ENCODE measurements at regions of chr1 and their contacts with region 1.

Region 1: DNA sequence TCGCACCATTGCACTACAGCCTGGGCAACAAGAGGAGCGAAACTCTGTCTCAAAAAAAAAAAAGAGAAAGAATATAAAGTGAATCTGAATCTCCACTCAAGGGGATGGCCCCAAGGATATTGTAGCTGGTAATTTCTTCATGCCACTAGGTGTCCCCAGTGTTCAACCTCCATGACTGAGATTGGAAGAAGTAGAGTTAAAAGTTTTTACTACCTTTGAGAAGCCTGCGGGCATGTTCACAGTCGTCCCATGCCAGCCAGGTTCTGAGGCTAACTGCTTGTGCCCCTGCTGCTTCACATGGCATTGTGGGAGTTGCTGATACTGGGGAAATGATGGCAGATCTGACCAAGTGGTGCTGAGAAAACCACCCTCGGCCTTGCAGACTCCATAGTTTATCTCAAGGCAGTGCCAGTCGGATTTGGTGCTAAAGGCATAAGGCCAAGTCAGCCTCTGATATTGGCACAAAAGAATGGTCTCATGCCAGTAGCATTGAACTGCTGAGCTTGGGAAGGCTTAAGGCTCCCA is 10.8 kb upstream of the SHISA4 start:
- DNase-seq: peak; percentile 85
- H3K4me3 Mint-ChIP-seq: no peak overlapping the region
- H3K27ac Mint-ChIP-seq: no peak overlapping the region
- H3K4me1 Mint-ChIP-seq: peaks cover 21% of the 10 kb centered on the region
- H3K27me3 Mint-ChIP-seq: no peaks in the 10 kb centered on the region
- CTCF ChIP-seq: peak; percentile 93

Region 2: GRCh38 chr1:201530741-201531531 is 347.0 kb before region 1 on chr1:
- CTCF ChIA-PET with region 1: interaction called, 15 read pairs
- POLR2A ChIA-PET with region 1: interaction called, 4 read pairs
- intact Hi-C with region 1: loop called (anchors 1 kb)
- DNase-seq: peak; percentile 91
- H3K4me3 Mint-ChIP-seq: no peak overlapping the region
- H3K27ac Mint-ChIP-seq: peak overlapping the region; percentile 46
- H3K4me1 Mint-ChIP-seq: peaks cover 9% of the 10 kb centered on the region
- H3K27me3 Mint-ChIP-seq: no peaks in the 10 kb centered on the region
- CTCF ChIP-seq: peak; percentile 99

Region 3: DNA sequence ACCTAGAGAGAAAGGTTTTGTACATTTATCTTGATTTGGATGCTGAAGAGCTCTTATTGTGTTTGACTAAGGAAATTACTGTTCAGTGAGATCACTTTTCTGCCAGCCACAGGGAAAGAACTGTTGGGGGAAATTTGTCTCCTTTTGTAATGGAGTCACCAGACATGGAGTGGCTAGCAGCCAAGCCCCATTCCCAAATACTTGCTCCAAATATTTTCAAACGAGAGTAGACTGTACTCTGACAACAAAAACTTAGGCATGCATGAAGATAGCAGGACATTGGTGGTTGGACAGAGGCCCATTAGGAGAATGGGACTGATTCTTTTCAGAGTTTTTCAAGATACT is 27.9 kb before region 1 on chr1:
- CTCF ChIA-PET with region 1: interaction called, 18 read pairs
- POLR2A ChIA-PET with region 1: interaction called, 8 read pairs
- intact Hi-C with region 1: no loop called
- DNase-seq: peak; percentile 51
- H3K4me3 Mint-ChIP-seq: no peak overlapping the region
- H3K27ac Mint-ChIP-seq: peak overlapping the region; percentile 58
- H3K4me1 Mint-ChIP-seq: peaks cover 41% of the 10 kb centered on the region
- H3K27me3 Mint-ChIP-seq: no peaks in the 10 kb centered on the region
- CTCF ChIP-seq: no peak

Region 4: GRCh38 chr1:201916649-201917249 is 38.8 kb after region 1 on chr1:
- CTCF ChIA-PET with region 1: interaction called, 5 read pairs
- POLR2A ChIA-PET with region 1: interaction called, 15 read pairs
- intact Hi-C with region 1: no loop called
- DNase-seq: peak; percentile 100
- H3K4me3 Mint-ChIP-seq: no peak overlapping the region
- H3K27ac Mint-ChIP-seq: no peak overlapping the region
- H3K4me1 Mint-ChIP-seq: peaks cover 34% of the 10 kb centered on the region
- H3K27me3 Mint-ChIP-seq: peaks cover 11% of the 10 kb centered on the region
- CTCF ChIP-seq: no peak

Region 5: DNA sequence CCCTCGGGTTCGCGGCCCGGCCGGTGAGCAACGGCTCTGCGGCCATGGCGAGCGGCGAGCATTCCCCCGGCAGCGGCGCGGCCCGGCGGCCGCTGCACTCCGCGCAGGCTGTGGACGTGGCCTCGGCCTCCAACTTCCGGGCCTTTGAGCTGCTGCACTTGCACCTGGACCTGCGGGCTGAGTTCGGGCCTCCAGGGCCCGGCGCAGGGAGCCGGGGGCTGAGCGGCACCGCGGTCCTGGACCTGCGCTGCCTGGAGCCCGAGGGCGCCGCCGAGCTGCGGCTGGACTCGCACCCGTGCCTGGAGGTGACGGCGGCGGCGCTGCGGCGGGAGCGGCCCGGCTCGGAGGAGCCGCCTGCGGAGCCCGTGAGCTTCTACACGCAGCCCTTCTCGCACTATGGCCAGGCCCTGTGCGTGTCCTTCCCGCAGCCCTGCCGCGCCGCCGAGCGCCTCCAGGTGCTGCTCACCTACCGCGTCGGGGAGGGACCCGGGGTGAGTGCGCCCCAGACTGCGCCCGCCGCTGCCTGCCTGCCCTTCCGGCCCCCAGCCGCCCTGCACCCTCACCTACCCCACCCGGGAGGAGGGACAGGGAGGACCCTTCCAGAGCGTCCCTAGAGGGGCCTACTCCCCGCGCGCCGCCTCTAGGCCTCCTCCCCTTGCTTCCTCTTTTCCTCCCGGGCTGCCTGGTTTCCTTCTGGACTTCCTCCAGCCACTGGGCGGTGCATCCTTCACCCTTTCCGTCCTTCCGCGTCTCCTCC is 104.9 kb after region 1 on chr1 and contains the start of gene RNPEP:
- CTCF ChIA-PET with region 1: interaction called, 9 read pairs
- POLR2A ChIA-PET with region 1: interaction called, 23 read pairs
- intact Hi-C with region 1: no loop called
- DNase-seq: peak; percentile 94
- H3K4me3 Mint-ChIP-seq: peak within 1 kb of the TSS; percentile 90
- H3K27ac Mint-ChIP-seq: peak within 1 kb of the TSS; percentile 66
- H3K4me1 Mint-ChIP-seq: peaks cover 24% of the 10 kb centered on the region
- H3K27me3 Mint-ChIP-seq: no peaks in the 10 kb centered on the region
- CTCF ChIP-seq: peak; percentile 30
- total RNA-seq, gene RNPEP: 147 and 155 TPM in 2 replicates

Region 6: DNA sequence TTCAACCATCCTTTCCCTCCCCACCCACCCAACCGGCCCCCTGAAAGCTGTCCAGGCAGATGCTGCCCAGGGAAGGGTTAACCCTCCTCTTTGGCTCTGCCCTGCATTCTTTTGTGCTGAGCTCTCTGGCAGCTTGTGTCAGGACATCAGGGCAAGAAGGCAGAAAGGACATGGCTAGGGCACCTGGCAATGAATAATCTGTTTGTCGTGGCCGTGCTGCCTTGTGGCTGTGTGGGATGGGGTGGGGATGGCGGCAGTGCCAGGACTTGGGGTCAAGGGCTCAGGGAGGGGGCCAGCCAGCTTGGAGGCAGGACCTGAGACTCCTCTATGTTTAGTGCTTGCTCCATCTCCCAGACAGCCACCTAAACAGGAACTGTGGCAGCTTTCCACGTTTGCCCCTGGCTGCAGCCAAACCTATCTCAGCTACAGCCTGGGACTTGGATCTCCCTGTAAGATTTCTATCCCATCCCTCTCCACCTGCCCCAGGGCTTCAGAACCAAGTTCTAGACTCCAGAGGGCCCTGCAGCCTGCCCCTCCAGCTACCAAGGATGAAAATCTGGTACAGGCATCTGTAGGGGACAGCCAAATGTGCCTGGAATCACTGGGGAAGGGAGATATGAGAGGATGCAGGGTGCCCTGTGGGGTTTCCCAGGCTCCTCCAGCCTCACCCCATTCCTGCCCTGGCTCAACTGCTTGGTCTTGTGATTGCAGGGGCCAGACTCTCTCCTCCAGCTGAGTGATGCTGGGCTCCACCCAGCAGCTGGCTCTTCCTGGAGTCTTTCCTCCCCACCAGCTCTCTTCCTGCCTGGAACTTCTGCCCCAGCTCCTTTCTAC is 235.1 kb after region 1 on chr1:
- CTCF ChIA-PET with region 1: interaction called, 5 read pairs
- POLR2A ChIA-PET with region 1: no interaction called
- intact Hi-C with region 1: loop called (anchors 5 kb)
- DNase-seq: peak; percentile 27
- H3K4me3 Mint-ChIP-seq: no peak overlapping the region
- H3K27ac Mint-ChIP-seq: no peak overlapping the region
- H3K4me1 Mint-ChIP-seq: peaks cover 31% of the 10 kb centered on the region
- H3K27me3 Mint-ChIP-seq: no peaks in the 10 kb centered on the region
- CTCF ChIP-seq: no peak

Region 7: DNA sequence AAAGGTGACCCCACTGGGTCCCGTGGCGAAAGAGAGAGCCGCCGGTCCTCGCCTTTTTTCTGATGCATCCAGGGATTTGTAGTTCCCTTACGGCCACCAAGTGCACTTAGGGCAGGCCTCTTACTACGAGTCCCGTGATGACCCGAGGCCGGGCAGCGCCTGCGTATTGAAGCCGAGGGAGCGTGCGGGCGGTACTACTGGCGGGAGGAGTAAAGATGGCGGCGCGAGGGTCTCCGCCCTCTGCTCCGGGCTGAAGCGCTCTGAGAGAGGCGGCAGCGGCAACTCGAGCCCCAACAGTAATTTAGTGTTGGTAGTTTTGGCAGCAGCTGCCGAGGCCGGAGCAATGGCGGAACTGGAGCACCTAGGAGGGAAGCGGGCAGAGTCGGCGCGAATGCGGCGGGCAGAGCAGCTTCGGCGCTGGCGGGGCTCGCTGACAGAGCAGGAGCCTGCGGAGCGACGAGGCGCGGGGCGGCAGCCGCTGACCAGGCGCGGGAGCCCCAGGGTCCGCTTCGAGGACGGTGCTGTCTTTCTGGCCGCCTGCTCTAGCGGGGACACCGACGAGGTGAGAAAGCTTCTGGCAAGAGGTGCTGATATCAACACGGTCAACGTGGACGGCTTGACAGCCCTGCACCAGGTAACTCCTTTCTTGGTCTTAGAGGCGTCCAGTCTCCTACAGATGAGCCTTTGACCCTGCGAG is 470.7 kb after region 1 on chr1 and contains the start of gene PPP1R12B:
- CTCF ChIA-PET with region 1: no interaction called
- POLR2A ChIA-PET with region 1: no interaction called
- intact Hi-C with region 1: no loop called
- DNase-seq: peak; percentile 100
- H3K4me3 Mint-ChIP-seq: peak within 1 kb of the TSS; percentile 81
- H3K27ac Mint-ChIP-seq: peak within 1 kb of the TSS; percentile 78
- H3K4me1 Mint-ChIP-seq: peaks cover 33% of the 10 kb centered on the region
- H3K27me3 Mint-ChIP-seq: no peaks in the 10 kb centered on the region
- CTCF ChIP-seq: no peak
- total RNA-seq, gene PPP1R12B: 31.1 and 33.8 TPM in 2 replicates

Region 8: GRCh38 chr1:202438432-202439174 is 560.7 kb after region 1 on chr1:
- CTCF ChIA-PET with region 1: no interaction called
- POLR2A ChIA-PET with region 1: no interaction called
- intact Hi-C with region 1: no loop called
- DNase-seq: no peak
- H3K4me3 Mint-ChIP-seq: no peak overlapping the region
- H3K27ac Mint-ChIP-seq: no peak overlapping the region
- H3K4me1 Mint-ChIP-seq: no peaks in the 10 kb centered on the region
- H3K27me3 Mint-ChIP-seq: no peaks in the 10 kb centered on the region
- CTCF ChIP-seq: no peak